Activated naive CD4-positive, alpha-beta T cell treated with anti-CD3 and anti-CD28 coated beads for 36 hours (primary cell): ENCODE measurements at regions of chr7 and their contacts with region 1.

Region 1: DNA sequence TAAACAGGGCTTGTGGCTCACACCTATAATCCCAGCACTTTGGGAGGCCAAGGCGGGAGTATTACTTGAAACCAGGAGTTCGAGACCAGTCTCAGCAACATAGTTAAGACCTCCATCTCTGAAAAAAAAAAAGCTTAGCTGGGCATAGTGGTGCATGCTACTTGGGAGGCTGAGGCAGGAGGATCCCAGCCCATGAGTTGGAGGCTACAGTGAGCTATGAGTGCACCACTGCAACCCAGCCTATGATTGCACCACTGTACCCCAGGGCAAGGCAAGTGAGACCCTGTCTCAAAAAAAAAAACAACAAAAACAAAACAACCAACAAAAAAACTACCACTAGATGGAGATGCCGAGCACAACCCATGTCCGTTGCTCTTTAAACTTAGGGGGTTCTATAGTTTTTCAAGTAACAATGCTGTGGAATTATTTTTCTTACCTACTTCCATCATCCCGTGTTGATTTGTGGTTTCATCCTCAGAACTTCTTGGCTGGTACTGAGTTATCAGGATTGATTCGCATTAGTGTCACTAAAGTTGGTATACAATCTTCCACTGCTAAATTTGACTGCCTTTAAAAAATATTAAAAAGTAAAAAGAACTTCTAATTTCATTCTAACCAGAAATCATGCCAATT is 12.2 kb upstream of the REPIN1 start:
- DNase-seq: peak; percentile 28
- H3K4me3 Mint-ChIP-seq: no peak overlapping the region
- H3K27ac Mint-ChIP-seq: no peak overlapping the region
- H3K4me1 Mint-ChIP-seq: peaks cover 40% of the 10 kb centered on the region
- H3K27me3 Mint-ChIP-seq: no peaks in the 10 kb centered on the region

Region 2: DNA sequence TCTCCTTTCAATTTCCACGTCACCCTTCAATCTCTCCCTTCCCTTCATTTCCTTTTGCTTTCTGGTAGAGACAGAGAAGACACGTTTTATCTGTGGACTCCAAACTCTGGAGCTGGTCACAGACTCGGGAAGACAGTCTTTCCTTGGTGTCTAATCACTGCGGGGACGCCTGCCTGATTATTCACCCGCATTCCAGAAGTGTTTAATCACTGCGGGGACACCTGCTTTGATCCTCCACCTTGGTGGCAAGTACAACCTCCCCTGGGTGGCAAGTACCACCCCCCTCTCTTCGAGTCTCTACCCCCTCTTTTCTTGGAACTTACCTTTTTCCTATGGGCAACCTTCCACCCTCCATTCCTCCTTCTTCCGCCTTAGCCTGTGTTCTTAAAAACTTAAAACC is 48.5 kb before region 1 on chr7:
- CTCF ChIA-PET with region 1: no interaction called
- intact Hi-C with region 1: no loop called
- DNase-seq: no peak
- H3K4me3 Mint-ChIP-seq: no peak overlapping the region
- H3K27ac Mint-ChIP-seq: no peak overlapping the region
- H3K4me1 Mint-ChIP-seq: peaks cover 4% of the 10 kb centered on the region
- H3K27me3 Mint-ChIP-seq: no peaks in the 10 kb centered on the region

Region 3: DNA sequence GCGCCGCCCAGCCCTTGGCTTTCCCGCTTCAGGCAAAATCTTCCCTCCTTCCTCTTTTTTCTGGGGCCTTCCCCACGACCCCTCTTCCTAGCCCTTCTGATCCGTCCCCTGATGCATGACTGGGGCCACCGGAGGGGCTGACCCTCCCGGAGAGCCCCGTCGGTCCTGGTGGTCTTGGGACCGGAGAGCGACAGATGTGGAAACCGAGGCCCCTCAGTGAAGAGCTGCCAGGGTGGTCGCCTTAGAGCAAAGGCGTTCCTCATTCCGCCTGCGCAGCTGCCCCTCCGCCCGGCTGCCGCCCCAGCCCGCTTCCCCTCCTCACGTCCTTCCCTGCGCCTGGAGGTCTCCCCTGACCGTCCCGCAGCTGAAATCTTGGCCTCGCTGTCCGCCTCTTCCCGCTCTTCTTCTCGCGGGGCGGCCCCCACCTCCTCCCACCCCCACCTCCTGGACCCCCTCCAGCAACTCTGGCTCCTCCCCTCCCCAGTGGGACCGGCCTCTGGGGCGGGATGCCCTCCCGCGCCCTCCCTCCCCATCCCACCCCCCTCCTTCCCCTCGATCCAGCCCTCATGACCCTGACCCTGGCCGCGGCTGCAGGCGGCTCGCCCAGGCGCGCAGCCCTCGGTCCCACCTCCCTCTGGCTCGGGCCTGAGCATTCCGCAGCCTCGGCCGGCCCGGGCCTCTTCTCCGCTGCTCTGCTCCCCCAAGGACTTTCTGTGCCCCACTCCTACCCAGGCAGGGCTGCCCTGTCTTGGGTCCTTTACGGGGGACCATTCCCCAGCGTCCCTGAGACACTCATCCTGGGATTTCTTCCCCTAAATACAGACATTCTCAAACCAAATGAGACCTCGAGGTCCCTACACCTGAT is 14.9 kb before region 1 on chr7 and contains the start of gene RARRES2:
- CTCF ChIA-PET with region 1: interaction called, 11 read pairs
- intact Hi-C with region 1: no loop called
- DNase-seq: no peak
- H3K4me3 Mint-ChIP-seq: no peak within 1 kb of the TSS
- H3K27ac Mint-ChIP-seq: no peak within 1 kb of the TSS
- H3K4me1 Mint-ChIP-seq: peaks cover 4% of the 10 kb centered on the region
- H3K27me3 Mint-ChIP-seq: peaks cover 23% of the 10 kb centered on the region
- total RNA-seq, gene RARRES2: not detected

Region 4: DNA sequence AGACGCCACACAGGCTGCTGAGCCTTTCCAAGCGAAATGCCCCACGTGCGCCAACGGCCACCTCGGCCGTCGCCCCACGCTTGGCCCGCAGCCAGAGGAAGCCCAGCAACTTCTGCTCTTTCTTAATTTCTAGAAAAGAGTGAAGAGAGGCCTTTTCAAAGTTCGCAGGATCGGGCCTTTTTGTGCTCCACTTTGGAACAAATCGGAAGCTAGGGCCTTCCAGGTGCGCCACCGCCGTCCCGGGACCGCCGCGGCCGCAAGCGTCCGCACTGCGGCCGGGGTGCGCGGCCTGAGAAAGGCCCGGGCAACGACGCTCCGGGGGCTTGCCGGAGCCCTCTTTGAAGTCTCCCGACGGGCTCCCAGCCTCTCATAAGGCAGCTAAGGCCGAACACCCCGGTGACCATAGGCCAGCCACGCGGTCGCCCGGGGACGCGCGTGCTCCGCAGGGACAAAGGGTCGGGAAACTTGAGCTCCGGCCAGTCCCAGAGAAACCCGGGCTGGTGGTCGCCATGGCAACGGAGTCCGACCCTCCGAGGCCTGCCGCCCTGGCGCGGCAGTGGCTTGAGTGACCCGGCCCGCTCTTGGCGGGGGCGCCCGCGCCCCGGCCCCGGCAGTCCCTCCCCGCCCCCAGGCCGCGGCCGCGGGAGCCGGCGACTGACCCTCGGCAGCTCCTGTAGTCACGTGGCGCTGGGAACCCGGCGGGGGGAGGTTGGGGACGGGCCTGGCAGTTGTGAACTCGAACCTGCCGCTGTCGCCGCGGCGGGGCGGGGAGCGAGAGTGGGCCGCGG is 11.9 kb after region 1 on chr7 and contains the start of gene REPIN1:
- CTCF ChIA-PET with region 1: interaction called, 22 read pairs
- intact Hi-C with region 1: loop called (anchors 1 kb)
- DNase-seq: peak; percentile 84
- H3K4me3 Mint-ChIP-seq: peak within 1 kb of the TSS; percentile 94
- H3K27ac Mint-ChIP-seq: peak within 1 kb of the TSS; percentile 95
- H3K4me1 Mint-ChIP-seq: peaks cover 45% of the 10 kb centered on the region
- H3K27me3 Mint-ChIP-seq: no peaks in the 10 kb centered on the region
- total RNA-seq, gene REPIN1: 45.7 to 49.3 TPM

Region 5: DNA sequence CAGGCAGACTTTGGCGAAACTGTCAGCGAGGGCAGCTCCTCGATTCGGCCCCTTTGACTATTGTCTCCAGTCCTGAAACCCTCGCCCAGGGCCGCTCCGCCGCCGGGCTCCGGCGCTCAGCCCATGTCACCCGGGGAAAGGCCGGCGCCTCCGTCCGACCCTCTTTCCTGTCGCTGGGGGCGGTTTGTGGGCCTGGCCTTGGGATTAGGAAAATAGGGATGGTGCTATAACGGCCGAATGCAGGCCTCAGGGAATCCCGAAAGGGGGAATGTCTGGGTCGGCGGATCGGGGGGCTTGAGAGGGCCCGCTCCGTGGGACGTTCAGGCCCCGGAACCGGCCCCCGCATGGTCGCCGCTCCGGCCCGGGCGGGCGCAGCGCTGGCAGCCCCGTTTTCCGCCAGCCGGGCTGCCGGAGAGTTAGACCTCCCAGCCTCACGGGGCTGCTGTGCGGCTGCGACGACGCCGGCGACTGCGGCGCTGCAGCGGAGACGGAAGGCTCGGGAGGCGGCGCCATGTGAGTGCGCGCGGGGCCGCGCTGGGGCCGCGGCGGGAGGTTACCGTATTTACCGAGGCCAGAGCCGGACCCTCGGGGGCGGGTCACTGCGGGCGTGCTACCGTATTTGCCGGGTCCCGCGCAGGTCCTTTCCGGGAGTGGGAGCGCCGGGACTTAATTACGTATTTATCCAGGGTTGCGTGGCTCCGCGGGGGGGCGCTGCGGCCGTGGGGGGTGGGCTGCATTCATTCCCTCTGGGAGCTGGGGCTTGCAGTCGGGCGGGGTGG is 48.6 kb after region 1 on chr7:
- CTCF ChIA-PET with region 1: interaction called, 6 read pairs
- intact Hi-C with region 1: loop called (anchors 1 kb)
- DNase-seq: peak; percentile 76
- H3K4me3 Mint-ChIP-seq: peak overlapping the region; percentile 85
- H3K27ac Mint-ChIP-seq: peak overlapping the region; percentile 83
- H3K4me1 Mint-ChIP-seq: peaks cover 29% of the 10 kb centered on the region
- H3K27me3 Mint-ChIP-seq: no peaks in the 10 kb centered on the region

Region 6: GRCh38 chr7:150420987-150421674 is 64.8 kb after region 1 on chr7:
- CTCF ChIA-PET with region 1: interaction called, 8 read pairs
- intact Hi-C with region 1: loop called (anchors 1 kb)
- DNase-seq: peak; percentile 94
- H3K4me3 Mint-ChIP-seq: peak overlapping the region; percentile 4
- H3K27ac Mint-ChIP-seq: no peak overlapping the region
- H3K4me1 Mint-ChIP-seq: peaks cover 12% of the 10 kb centered on the region
- H3K27me3 Mint-ChIP-seq: peaks cover 2% of the 10 kb centered on the region

Region 7: GRCh38 chr7:151727579-151728285 is 1371.4 kb after region 1 on chr7:
- CTCF ChIA-PET with region 1: no interaction called
- intact Hi-C with region 1: no loop called
- DNase-seq: peak; percentile 82
- H3K4me3 Mint-ChIP-seq: no peak overlapping the region
- H3K27ac Mint-ChIP-seq: no peak overlapping the region
- H3K4me1 Mint-ChIP-seq: peaks cover 15% of the 10 kb centered on the region
- H3K27me3 Mint-ChIP-seq: no peaks in the 10 kb centered on the region